ENCODE measurements at regions of chr4 and their contacts with region 1.

Region 1: DNA sequence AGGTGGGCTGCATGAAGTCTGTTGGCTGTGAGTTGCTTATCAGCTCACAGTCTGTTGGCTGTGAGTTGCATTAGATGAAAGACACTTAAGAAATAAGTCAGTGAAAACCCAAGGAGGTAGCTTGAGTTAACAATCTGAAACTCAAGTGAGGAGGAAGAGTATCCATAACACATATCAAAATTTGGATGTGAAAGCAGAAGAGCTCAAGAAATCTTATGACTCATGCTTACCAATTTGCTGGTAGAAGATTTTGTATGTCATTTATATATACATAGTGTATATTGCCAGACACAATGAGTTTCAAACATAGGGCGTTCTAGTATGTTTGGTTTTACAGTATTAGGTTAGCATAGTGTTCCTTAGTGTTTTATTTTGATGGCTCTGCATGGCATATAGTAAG is 107.4 kb downstream of the DDIT4L start:
- DNase-seq: peak; percentile 35
- H3K4me3 Mint-ChIP-seq: no peak overlapping the region
- H3K27ac Mint-ChIP-seq: peak overlapping the region; percentile 89
- H3K4me1 Mint-ChIP-seq: peaks cover 72% of the 10 kb centered on the region
- H3K27me3 Mint-ChIP-seq: peaks cover 2% of the 10 kb centered on the region

Region 2: GRCh38 chr4:99763635-99764101 is 319.2 kb before region 1 on chr4:
- CTCF ChIA-PET with region 1: no interaction called
- intact Hi-C with region 1: loop called (anchors 2 kb)
- DNase-seq: peak; percentile 38
- H3K4me3 Mint-ChIP-seq: no peak overlapping the region
- H3K27ac Mint-ChIP-seq: no peak overlapping the region
- H3K4me1 Mint-ChIP-seq: peaks cover 27% of the 10 kb centered on the region
- H3K27me3 Mint-ChIP-seq: peaks cover 13% of the 10 kb centered on the region

Region 3: GRCh38 chr4:99816545-99817308 is 266.1 kb before region 1 on chr4 and contains the start of gene DAPP1:
- CTCF ChIA-PET with region 1: no interaction called
- intact Hi-C with region 1: loop called (anchors 1 kb)
- DNase-seq: peak; percentile 87
- H3K4me3 Mint-ChIP-seq: peak within 1 kb of the TSS; percentile 76
- H3K27ac Mint-ChIP-seq: peak within 1 kb of the TSS; percentile 94
- H3K4me1 Mint-ChIP-seq: peaks cover 71% of the 10 kb centered on the region
- H3K27me3 Mint-ChIP-seq: no peaks in the 10 kb centered on the region
- total RNA-seq, gene DAPP1: 24.4 to 25.8 TPM

Region 4: DNA sequence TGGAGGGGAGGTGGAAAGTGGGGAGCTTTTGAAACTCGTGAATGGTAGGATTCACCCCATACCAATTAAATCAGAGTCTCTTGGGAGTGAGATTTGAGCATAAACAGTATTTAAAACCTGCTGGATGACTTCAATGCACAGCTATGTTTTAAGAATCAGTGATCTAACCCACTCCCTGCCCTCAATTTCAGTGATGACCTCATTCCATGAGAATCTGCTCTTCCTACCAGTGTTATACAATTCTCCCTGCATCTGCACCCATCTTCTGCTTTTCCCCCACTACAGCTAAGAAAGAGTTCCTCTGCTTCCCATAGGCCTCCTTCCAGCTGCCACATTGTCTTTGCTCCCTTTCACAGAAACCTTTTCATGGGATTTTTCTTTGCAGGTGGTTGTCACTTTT is 114.5 kb before region 1 on chr4:
- CTCF ChIA-PET with region 1: no interaction called
- intact Hi-C with region 1: no loop called
- DNase-seq: no peak
- H3K4me3 Mint-ChIP-seq: no peak overlapping the region
- H3K27ac Mint-ChIP-seq: no peak overlapping the region
- H3K4me1 Mint-ChIP-seq: peaks cover 17% of the 10 kb centered on the region
- H3K27me3 Mint-ChIP-seq: peaks cover 2% of the 10 kb centered on the region

Region 5: GRCh38 chr4:99998062-99998867 is 84.6 kb before region 1 on chr4:
- CTCF ChIA-PET with region 1: interaction called, 15 read pairs
- intact Hi-C with region 1: loop called (anchors 1 kb)
- DNase-seq: peak; percentile 10
- H3K4me3 Mint-ChIP-seq: no peak overlapping the region
- H3K27ac Mint-ChIP-seq: peak overlapping the region; percentile 59
- H3K4me1 Mint-ChIP-seq: peaks cover 11% of the 10 kb centered on the region
- H3K27me3 Mint-ChIP-seq: peaks cover 5% of the 10 kb centered on the region

Region 6: DNA sequence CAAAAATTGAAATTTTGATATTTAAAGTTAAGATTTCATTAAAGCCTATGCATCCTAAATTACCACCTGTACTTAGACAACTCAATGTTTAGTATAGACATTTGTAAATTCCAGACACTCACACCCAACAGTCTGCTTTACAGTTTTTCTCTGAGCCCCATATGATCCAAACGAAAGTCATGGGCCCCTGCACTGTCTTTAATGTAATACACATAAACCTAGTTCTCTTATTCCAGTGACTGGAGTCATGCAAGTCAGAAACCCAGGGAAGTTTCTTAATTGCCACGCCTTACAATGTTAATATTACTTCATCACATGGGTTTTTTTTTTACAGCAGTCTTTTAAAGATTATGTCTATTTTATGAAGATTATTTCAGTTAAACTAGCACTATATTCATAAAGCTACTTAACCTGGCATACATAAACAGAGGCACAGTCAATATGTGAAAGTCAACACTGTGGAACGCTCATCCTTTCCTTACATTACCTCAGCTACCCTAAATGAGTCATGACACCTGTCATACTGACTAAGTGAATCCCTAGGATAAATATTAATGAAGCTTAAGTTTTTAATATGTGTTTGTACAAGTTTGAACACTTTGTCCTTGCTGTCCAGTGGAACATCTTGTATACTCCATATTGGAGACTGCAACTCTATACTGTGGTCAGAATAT is 65.1 kb before region 1 on chr4:
- CTCF ChIA-PET with region 1: no interaction called
- intact Hi-C with region 1: loop called (anchors 1 kb)
- DNase-seq: peak; percentile 22
- H3K4me3 Mint-ChIP-seq: no peak overlapping the region
- H3K27ac Mint-ChIP-seq: peak overlapping the region; percentile 11
- H3K4me1 Mint-ChIP-seq: peaks cover 10% of the 10 kb centered on the region
- H3K27me3 Mint-ChIP-seq: peaks cover 3% of the 10 kb centered on the region

Region 7: GRCh38 chr4:100317032-100317864 is 234.4 kb after region 1 on chr4:
- CTCF ChIA-PET with region 1: no interaction called
- intact Hi-C with region 1: no loop called
- DNase-seq: no peak
- H3K4me3 Mint-ChIP-seq: no peak overlapping the region
- H3K27ac Mint-ChIP-seq: no peak overlapping the region
- H3K4me1 Mint-ChIP-seq: no peaks in the 10 kb centered on the region
- H3K27me3 Mint-ChIP-seq: peaks cover 7% of the 10 kb centered on the region

Region 8: GRCh38 chr4:100569196-100569595 is 486.3 kb after region 1 on chr4:
- CTCF ChIA-PET with region 1: no interaction called
- intact Hi-C with region 1: loop called (anchors 2 kb)
- DNase-seq: peak; percentile 26
- H3K4me3 Mint-ChIP-seq: no peak overlapping the region
- H3K27ac Mint-ChIP-seq: peak overlapping the region; percentile 59
- H3K4me1 Mint-ChIP-seq: peaks cover 21% of the 10 kb centered on the region
- H3K27me3 Mint-ChIP-seq: peaks cover 2% of the 10 kb centered on the region

Region 9: GRCh38 chr4:100593953-100594352 is 511.1 kb after region 1 on chr4:
- CTCF ChIA-PET with region 1: no interaction called
- intact Hi-C with region 1: no loop called
- DNase-seq: no peak
- H3K4me3 Mint-ChIP-seq: no peak overlapping the region
- H3K27ac Mint-ChIP-seq: no peak overlapping the region
- H3K4me1 Mint-ChIP-seq: peaks cover 2% of the 10 kb centered on the region
- H3K27me3 Mint-ChIP-seq: peaks cover 7% of the 10 kb centered on the region

Region 10: DNA sequence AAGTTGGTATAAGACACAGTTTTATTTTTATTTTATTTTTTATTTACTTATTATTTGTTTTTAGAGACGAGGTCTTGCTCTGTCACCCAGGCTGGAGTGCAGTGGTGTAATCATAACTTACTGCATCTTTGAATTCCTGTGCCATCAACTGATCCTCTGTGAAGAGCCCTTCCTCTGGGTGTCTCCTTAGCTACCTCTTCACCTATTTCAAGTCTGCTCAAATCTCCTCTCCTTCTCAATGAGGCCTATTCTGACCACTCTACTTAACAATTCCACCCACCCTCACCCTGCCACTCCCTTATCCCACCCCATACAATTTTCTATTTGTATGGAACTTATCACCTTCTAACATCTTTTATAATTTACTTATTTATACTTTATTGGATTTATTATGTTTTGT is 1081.1 kb after region 1 on chr4:
- CTCF ChIA-PET with region 1: no interaction called
- intact Hi-C with region 1: no loop called
- DNase-seq: no peak
- H3K4me3 Mint-ChIP-seq: no peak overlapping the region
- H3K27ac Mint-ChIP-seq: no peak overlapping the region
- H3K4me1 Mint-ChIP-seq: peaks cover 1% of the 10 kb centered on the region
- H3K27me3 Mint-ChIP-seq: no peaks in the 10 kb centered on the region

Region 11: GRCh38 chr4:101175896-101176676 is 1093.2 kb after region 1 on chr4:
- CTCF ChIA-PET with region 1: no interaction called
- intact Hi-C with region 1: loop called (anchors 5 kb)
- DNase-seq: no peak
- H3K4me3 Mint-ChIP-seq: no peak overlapping the region
- H3K27ac Mint-ChIP-seq: no peak overlapping the region
- H3K4me1 Mint-ChIP-seq: peaks cover 16% of the 10 kb centered on the region
- H3K27me3 Mint-ChIP-seq: no peaks in the 10 kb centered on the region